Activated CD4-positive, alpha-beta T cell treated with anti-CD3 and anti-CD28 coated beads for 36 hours (primary cell): ENCODE measurements at regions of chr6 and their contacts with region 1.

Region 1: DNA sequence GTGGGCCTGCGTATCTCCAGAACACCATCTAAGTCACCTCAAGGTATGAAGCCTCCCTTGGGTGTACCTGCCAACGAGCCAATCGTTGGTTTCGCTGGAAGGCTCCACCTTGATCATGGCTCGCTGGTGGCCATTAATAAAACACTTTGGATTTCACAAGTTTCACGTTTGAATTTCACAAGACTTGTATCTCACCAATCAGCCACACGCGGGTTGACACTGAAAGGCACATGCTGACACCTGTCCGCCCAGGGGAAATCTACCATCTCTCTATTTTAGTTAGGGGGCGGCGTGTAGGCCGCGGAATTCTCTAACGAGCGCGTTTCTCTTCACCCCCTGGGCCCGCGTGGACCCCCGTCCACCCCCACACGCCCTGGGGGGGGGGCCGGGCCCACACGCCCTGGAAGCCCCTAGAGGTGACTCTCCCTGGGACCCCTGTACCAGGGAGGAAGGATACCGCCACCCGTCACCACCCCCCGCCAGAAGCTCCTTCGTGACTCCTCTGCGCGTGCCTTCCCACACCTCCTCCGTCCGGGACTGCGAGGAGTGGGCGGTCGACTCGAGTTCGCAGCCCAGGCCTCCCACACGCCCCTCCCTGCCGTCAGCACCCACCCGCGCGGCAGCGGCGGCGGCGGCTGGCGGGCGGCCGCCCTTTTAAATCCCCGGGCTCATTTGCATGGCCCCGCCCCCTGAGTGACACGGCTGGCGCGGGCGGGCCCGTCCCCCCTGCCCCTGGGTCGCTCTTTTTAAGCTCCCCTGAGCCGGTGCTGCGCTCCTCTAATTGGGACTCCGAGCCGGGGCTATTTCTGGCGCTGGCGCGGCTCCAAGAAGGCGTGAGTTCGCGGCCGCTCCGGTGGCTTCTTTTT is at the start of gene HMGA1:
- DNase-seq: peak; percentile 94
- ATAC-seq: peak; percentile 70
- H3K4me3 Mint-ChIP-seq: peak within 1 kb of the TSS; percentile 85
- H3K27ac Mint-ChIP-seq: peak within 1 kb of the TSS; percentile 91
- H3K4me1 Mint-ChIP-seq: peaks cover 41% of the 10 kb centered on the region
- H3K27me3 Mint-ChIP-seq: no peaks in the 10 kb centered on the region
- total RNA-seq, gene HMGA1: 569 to 649 TPM

Region 2: GRCh38 chr6:33417903-33418689 is 818.3 kb before region 1 on chr6 and contains the start of gene CUTA:
- CTCF ChIA-PET with region 1: no interaction called
- POLR2A ChIA-PET with region 1: no interaction called
- intact Hi-C with region 1: loop called in 1 of 2 experiments (anchors 5 kb)
- DNase-seq: peak; percentile 100
- ATAC-seq: peak; percentile 87
- H3K4me3 Mint-ChIP-seq: peak within 1 kb of the TSS; percentile 96
- H3K27ac Mint-ChIP-seq: peak within 1 kb of the TSS; percentile 98
- H3K4me1 Mint-ChIP-seq: peaks cover 54% of the 10 kb centered on the region
- H3K27me3 Mint-ChIP-seq: no peaks in the 10 kb centered on the region
- total RNA-seq, gene CUTA: 154 to 188 TPM

Region 3: DNA sequence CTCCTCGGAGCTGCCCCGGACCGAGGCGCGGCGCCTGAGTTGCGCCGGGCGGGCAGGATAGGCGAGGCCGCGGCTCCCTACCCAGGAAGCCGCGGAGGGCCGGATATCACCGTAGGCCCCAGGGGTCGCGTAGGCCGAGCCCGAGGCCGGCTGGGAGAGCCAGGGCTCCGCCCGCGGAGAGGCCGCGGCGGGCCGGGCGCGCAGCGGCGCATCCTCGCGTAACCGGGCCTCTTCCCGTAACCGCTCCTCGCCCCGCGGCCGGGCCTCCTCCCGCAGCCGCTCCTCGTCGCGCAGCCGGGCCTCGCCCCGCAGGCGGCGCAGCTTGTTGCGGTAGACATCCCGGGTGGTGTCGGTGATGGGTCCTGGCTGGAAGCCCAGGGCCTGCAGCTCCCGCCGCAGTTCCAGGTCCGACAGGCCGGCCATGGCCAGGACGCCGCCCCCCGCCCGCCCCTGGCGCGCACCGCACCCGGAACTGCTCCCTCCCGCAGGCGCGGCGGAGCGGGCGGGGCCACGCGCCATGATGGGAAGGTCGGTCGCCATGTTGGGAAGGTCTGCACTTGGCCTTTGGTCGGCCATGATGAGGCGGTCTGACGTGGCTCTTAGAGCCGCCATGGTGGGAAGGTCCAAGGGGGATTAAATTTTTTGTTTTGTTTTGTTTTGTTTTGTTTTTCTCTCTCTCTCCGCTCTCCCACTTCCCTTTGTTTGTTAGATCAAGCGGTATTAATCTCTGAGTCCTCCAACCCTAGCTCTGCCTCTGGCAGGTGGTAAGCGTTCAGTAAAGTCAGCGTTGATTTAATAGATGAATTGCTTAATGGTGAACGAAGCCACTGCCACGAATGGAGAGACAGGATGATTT is 447.4 kb before region 1 on chr6 and contains the start of gene LEMD2:
- CTCF ChIA-PET with region 1: no interaction called
- POLR2A ChIA-PET with region 1: no interaction called
- intact Hi-C with region 1: loop called in 1 of 2 experiments (anchors 5 kb)
- DNase-seq: peak; percentile 93
- ATAC-seq: peak; percentile 87
- H3K4me3 Mint-ChIP-seq: peak within 1 kb of the TSS; percentile 96
- H3K27ac Mint-ChIP-seq: peak within 1 kb of the TSS; percentile 99
- H3K4me1 Mint-ChIP-seq: peaks cover 47% of the 10 kb centered on the region
- H3K27me3 Mint-ChIP-seq: no peaks in the 10 kb centered on the region
- total RNA-seq, gene LEMD2: 55.2 to 61.5 TPM

Region 4: GRCh38 chr6:34223956-34224940 is 12.1 kb before region 1 on chr6:
- CTCF ChIA-PET with region 1: interaction called, 7 read pairs
- POLR2A ChIA-PET with region 1: interaction called, 16 read pairs
- intact Hi-C with region 1: loop called (anchors 1 kb)
- DNase-seq: peak; percentile 98
- ATAC-seq: peak; percentile 97
- H3K4me3 Mint-ChIP-seq: peak overlapping the region; percentile 52
- H3K27ac Mint-ChIP-seq: peak overlapping the region; percentile 88
- H3K4me1 Mint-ChIP-seq: peaks cover 44% of the 10 kb centered on the region
- H3K27me3 Mint-ChIP-seq: no peaks in the 10 kb centered on the region

Region 5: DNA sequence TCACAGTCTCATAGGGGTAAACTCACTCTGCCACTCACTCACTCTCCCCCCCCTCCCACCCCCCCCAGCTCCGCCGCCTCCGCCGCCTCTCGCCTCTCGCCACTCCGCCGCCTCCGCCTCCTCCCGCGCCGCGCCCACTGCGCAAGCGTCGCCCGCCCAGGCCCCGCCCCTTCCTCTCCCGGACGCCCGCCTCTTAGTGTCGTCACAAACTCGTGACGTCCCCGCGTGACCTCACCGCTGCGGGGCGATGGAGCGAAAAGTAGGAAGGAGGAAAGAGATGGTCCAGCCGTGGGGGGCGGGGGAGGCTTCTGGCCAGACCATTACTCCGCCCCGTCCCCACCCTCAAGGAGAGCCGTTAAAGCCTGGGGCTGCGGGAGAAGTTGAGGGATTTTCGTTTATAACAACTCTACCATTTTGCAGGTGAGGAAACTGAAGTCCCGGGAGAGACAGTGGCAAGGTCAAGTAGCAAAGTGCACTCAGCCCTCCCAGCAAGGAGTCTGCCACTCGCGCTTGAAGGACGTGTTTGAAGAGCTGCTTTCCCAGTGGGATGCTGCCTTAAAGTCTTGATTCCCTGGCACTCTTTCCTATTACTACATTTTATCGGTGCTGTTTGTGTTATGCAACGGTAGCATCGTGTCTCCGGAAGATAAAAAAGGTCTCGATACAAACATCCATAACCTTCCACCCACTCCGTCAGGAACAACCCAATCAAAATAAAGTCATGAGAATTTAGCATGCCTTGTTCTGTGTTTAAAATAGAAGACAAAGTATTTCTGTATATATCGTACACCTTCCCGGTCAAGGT is 460.6 kb after region 1 on chr6 and contains the start of gene ILRUN:
- CTCF ChIA-PET with region 1: no interaction called
- POLR2A ChIA-PET with region 1: no interaction called
- intact Hi-C with region 1: loop called in 1 of 2 experiments (anchors 5 kb)
- DNase-seq: peak; percentile 98
- ATAC-seq: peak; percentile 84
- H3K4me3 Mint-ChIP-seq: peak within 1 kb of the TSS; percentile 92
- H3K27ac Mint-ChIP-seq: peak within 1 kb of the TSS; percentile 99
- H3K4me1 Mint-ChIP-seq: peaks cover 45% of the 10 kb centered on the region
- H3K27me3 Mint-ChIP-seq: no peaks in the 10 kb centered on the region
- total RNA-seq, gene ILRUN: 56.2 to 66.9 TPM

Region 6: GRCh38 chr6:35468181-35468979 is 1232.0 kb after region 1 on chr6 and contains the start of gene RPL10A:
- CTCF ChIA-PET with region 1: no interaction called
- POLR2A ChIA-PET with region 1: no interaction called
- intact Hi-C with region 1: loop called in 1 of 2 experiments (anchors 5 kb)
- DNase-seq: peak; percentile 97
- ATAC-seq: peak; percentile 87
- H3K4me3 Mint-ChIP-seq: peak within 1 kb of the TSS; percentile 93
- H3K27ac Mint-ChIP-seq: peak within 1 kb of the TSS; percentile 98
- H3K4me1 Mint-ChIP-seq: peaks cover 43% of the 10 kb centered on the region
- H3K27me3 Mint-ChIP-seq: no peaks in the 10 kb centered on the region
- total RNA-seq, gene RPL10A: 1,952 to 2,334 TPM